GM12878 (cell line): ENCODE measurements at regions of chr17 and their contacts with region 1.

Region 1: GRCh38 chr17:77068915-77069314 is 71.9 kb upstream of the SEC14L1 start:
- DNase-seq: no peak
- ATAC-seq: no peak
- H3K4me3 ChIP-seq: no peak overlapping the region
- H3K27ac ChIP-seq: no peak overlapping the region
- H3K4me1 ChIP-seq: no peaks in the 10 kb centered on the region
- H3K27me3 ChIP-seq: peaks cover 0 to 3% of the 10 kb centered on the region in 2 experiments; a peak in 1 of 4 replicates
- CTCF ChIP-seq: no peak
- EP300 ChIP-seq: no peak
- POLR2A ChIP-seq: no peak
- RAD21 ChIP-seq: no peak

Region 2: DNA sequence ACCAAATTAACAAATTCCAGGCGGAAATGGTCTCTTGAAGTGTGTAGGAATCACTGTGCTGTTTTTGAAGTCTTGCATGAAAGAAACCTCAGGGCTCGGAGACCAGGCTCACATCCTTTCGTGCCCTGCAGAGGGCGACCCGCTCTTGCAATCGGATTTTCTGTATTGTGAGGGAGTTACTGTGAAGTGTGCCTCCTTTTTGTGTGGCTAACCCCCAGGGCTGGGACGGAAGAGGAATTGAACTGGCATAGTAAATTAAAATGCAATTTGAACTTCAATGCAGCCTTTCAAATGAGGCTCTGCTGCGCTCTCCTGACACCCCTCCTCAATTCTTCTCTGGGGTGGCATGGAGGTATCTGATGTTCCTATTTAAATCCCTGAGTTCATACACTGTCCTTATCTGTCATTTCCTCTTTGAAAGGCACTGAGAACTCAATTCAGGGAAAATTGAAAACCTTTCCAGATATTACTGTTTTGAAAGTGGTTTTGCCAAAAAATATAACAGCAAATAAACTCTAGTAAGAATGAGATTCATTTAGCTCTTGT is 252.3 kb before region 1 on chr17:
- CTCF ChIA-PET with region 1: interaction called, 7 read pairs
- POLR2A ChIA-PET with region 1: no interaction called
- RAD21 ChIA-PET with region 1: no interaction called
- SMC1A ChIA-PET with region 1: no interaction called
- in situ Hi-C with region 1: no loop called
- intact Hi-C with region 1: loop called (anchors 5 kb)
- DNase-seq: no peak
- ATAC-seq: peak; percentile 88
- H3K4me3 ChIP-seq: no peak overlapping the region
- H3K27ac ChIP-seq: no peak overlapping the region
- H3K4me1 ChIP-seq: no peaks in the 10 kb centered on the region
- H3K27me3 ChIP-seq: no peaks in the 10 kb centered on the region
- CTCF ChIP-seq: peak; percentile 78 to 86 (median 78)
- EP300 ChIP-seq: no peak
- POLR2A ChIP-seq: no peak
- RAD21 ChIP-seq: peak; percentile 68

Region 3: GRCh38 chr17:76868176-76868668 is 200.7 kb before region 1 on chr17 and contains the start of gene MGAT5B:
- CTCF ChIA-PET with region 1: interaction called, 19 read pairs
- POLR2A ChIA-PET with region 1: no interaction called
- RAD21 ChIA-PET with region 1: interaction called, 5 read pairs
- SMC1A ChIA-PET with region 1: no interaction called
- in situ Hi-C with region 1: no loop called
- intact Hi-C with region 1: no loop called
- DNase-seq: no peak
- ATAC-seq: peak; percentile 99
- H3K4me3 ChIP-seq: no peak within 1 kb of the TSS
- H3K27ac ChIP-seq: no peak within 1 kb of the TSS
- H3K4me1 ChIP-seq: no peaks in the 10 kb centered on the region; the same call in 1 of the 2 replicates
- H3K27me3 ChIP-seq: peaks cover 0 to 5% of the 10 kb centered on the region in 2 experiments; a peak in 3 of 4 replicates
- CTCF ChIP-seq: peak; percentile 71 to 91 (median 74); a peak in 5 of 6 replicates
- EP300 ChIP-seq: no peak
- POLR2A ChIP-seq: no peak
- RAD21 ChIP-seq: peak; percentile 90
- polyA plus RNA-seq, gene MGAT5B: not detected

Region 4: GRCh38 chr17:76940738-76941350 is 128.1 kb before region 1 on chr17:
- CTCF ChIA-PET with region 1: no interaction called
- POLR2A ChIA-PET with region 1: no interaction called
- RAD21 ChIA-PET with region 1: no interaction called
- SMC1A ChIA-PET with region 1: no interaction called
- in situ Hi-C with region 1: no loop called
- intact Hi-C with region 1: no loop called
- DNase-seq: no peak
- ATAC-seq: no peak
- H3K4me3 ChIP-seq: no peak overlapping the region
- H3K27ac ChIP-seq: no peak overlapping the region
- H3K4me1 ChIP-seq: no peaks in the 10 kb centered on the region
- H3K27me3 ChIP-seq: no peaks in the 10 kb centered on the region; a peak in 1 of 4 replicates
- CTCF ChIP-seq: peak in 1 of 3 experiments; percentile 15; a peak in 2 of 6 replicates
- EP300 ChIP-seq: no peak
- POLR2A ChIP-seq: no peak
- RAD21 ChIP-seq: no peak